GM18951 (cell line): ENCODE measurements at regions of chr6 and their contacts with region 1.

Region 1: DNA sequence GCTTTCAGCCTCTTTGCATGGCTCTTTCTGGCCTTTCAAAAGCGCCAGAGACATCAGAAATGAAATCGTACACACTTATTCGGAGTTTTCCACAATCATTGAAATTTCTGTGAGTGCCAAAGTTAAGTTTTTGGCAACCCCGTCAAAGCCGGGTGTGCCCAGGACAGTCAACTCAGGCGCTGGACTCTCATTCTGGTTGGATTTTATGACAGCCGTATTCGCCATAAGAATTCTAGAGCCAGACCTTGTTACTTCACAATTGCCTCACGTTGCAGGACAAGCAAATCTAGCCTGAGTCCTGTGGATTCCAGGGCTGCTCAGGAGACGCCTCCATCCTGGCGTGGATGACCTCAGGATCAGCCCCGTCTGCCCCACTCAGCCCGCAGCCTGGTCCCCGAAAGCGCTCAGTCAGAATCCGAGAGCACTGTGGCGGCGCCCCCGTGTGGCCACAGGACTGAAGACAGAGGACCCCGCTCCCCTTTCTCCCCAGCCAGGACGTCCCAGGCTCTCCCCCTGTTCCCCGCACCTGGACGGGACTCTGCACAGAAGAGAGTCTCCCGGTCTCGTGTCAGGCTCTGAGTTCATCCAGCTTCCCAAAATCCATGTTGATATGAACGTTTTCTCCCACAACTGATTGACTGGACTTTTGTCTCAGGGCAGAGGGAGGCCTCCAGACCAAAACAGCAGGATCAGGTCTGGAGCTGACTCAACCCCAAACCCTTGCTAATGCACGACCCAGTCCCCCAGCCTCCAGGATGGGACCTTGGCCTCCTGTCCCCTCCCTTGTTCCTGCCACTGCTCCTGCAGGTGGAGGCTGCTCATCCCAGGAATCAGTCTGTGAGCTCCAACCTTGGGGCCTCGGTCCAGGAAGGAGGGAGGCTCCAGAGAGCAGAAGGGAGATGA is 38.2 kb downstream of the MICA start:
- POLR2A ChIP-seq: no peak

Region 2: DNA sequence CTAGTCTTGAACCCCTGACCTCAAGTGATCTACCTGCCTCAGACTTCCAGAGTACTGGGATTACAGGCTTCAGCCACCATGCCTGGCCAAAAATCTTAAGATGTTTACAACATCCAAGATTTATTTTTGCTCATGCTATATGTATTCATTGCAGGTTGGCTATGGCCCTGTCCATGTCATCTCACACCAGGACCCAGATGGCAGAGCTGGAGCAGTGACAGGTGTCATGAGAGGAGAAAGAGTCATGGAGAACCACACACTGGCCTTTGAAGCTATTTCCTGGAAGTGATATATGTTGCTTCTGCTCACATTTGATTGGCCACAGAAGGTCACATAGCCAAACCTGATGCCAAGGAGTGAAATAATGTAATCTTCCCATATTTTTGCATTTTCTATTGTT is 571.1 kb before region 1 on chr6:
- in situ Hi-C with region 1: no loop called
- POLR2A ChIP-seq: no peak

Region 3: GRCh38 chr6:31399589-31400466 is 41.8 kb before region 1 on chr6:
- in situ Hi-C with region 1: loop called (anchors 10 kb)
- POLR2A ChIP-seq: no peak

Region 4: GRCh38 chr6:31680840-31681671 is 239.4 kb after region 1 on chr6 and contains the start of gene LY6G5C:
- in situ Hi-C with region 1: no loop called
- POLR2A ChIP-seq: peak; percentile 36